GM12878 (cell line): ENCODE measurements at regions of chr11 and their contacts with region 1.

Region 1: DNA sequence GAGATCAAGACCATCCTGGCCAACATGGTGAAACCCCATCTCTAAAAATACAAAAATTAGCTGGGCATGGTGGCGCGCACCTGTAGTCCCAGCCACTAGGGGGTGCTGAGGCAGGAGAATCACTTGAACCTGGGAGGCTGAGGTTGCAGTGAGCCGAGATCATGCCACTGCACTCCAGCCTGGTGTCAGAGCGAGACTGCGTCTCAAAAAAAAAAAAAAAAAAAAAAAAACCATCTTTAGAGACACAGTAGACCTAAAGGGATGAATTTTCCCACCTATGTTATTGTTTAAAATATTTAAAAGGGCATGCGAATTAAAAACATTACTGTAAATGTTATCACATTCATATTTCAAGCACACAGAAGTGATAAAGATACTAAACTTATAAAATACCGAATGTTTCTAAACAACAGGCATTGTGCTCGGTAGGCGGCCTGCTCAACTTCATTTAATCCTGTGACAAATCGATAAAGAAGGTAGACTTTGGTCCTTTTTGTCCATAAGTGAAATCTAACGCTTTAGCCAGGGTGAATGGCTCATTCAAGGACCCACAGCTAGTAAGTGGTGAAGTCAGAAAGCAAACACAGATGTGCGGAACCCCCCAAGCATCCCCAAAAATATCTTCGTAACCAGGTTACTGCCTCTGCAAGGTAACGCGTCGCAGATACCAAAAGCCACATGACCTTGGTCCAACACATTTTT is 16.1 kb downstream of the NCAPD3 start:
- DNase-seq: no peak
- ATAC-seq: peak; percentile 62
- H3K4me3 ChIP-seq: no peak overlapping the region
- H3K27ac ChIP-seq: no peak overlapping the region
- H3K4me1 ChIP-seq: no peaks in the 10 kb centered on the region
- H3K27me3 ChIP-seq: no peaks in the 10 kb centered on the region
- CTCF ChIP-seq: peak; percentile 25 to 50 (median 50); a peak in 5 of 6 replicates
- EP300 ChIP-seq: no peak
- POLR2A ChIP-seq: no peak
- RAD21 ChIP-seq: 0 out of 2 replicates have a peak, but pooled peaks have one; percentile 26

Region 2: DNA sequence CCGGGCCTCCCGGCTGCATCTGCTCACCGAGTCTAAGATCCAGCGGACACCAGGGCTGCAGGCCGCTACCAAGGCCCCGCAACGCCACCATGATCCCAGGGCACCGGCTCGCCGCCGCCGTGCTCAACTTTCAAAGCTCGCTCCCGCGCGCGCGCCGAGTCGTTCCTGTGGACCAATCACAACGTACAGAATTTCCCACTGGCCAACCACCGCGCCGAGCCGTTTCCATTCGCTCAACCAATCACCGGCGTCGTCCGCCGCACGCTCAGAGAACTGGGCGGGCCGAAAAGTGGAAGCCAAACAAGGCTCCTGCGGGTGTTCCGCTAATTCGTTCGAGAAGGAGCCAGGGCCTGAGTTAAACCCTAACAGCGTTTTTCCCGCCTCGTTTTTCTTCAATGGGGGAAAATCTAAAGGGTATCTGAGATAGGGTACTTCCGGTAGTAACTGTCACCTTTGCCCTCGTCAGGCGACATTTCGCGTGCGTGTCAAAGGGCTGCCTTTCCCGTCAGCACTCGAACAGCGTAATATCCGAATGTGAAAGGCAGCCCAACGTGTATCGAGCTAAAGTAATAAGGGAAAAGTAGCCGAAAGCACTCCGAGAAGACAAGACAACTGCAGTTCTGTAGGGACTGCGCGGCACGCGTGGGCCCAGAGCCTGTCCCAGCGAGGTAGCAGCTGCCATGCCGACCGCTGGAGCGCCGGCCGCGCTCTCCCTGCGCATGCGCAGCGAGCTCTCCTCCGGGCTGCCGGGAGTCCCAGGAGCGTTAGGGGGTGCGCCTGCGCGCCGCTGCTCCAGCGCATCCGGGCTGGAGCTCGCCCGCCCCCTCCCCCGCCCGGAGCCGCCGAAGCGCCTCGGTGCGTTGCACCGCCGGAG is 16.4 kb after region 1 on chr11 and contains the starts of genes NCAPD3 and VPS26B:
- CTCF ChIA-PET with region 1: interaction called, 16 read pairs
- POLR2A ChIA-PET with region 1: no interaction called
- RAD21 ChIA-PET with region 1: interaction called, 3 read pairs
- SMC1A ChIA-PET with region 1: interaction called, 4 read pairs
- in situ Hi-C with region 1: no loop called
- intact Hi-C with region 1: loop called (anchors 2 kb)
- DNase-seq: peak; percentile 77
- ATAC-seq: peak; percentile 90
- H3K4me3 ChIP-seq: peak within 1 kb of the TSS; percentile 74
- H3K27ac ChIP-seq: peak within 1 kb of the TSS; percentile 91
- H3K4me1 ChIP-seq: peaks cover 19% of the 10 kb centered on the region
- H3K27me3 ChIP-seq: no peaks in the 10 kb centered on the region
- CTCF ChIP-seq: no peak
- EP300 ChIP-seq: no peak
- POLR2A ChIP-seq: peak; percentile 86
- RAD21 ChIP-seq: no peak
- polyA plus RNA-seq, gene NCAPD3: 14.9 to 17.5 TPM
- polyA plus RNA-seq, gene VPS26B: 1.6 to 2.7 TPM

Region 3: GRCh38 chr11:134244655-134245054 is 37.0 kb after region 1 on chr11:
- CTCF ChIA-PET with region 1: interaction called, 56 read pairs
- POLR2A ChIA-PET with region 1: no interaction called
- RAD21 ChIA-PET with region 1: interaction called, 8 read pairs
- SMC1A ChIA-PET with region 1: interaction called, 10 read pairs
- in situ Hi-C with region 1: no loop called
- intact Hi-C with region 1: no loop called
- DNase-seq: no peak
- ATAC-seq: peak; percentile 96
- H3K4me3 ChIP-seq: no peak overlapping the region
- H3K27ac ChIP-seq: no peak overlapping the region
- H3K4me1 ChIP-seq: no peaks in the 10 kb centered on the region
- H3K27me3 ChIP-seq: no peaks in the 10 kb centered on the region
- CTCF ChIP-seq: peak; percentile 63 to 72 (median 63)
- EP300 ChIP-seq: no peak
- POLR2A ChIP-seq: no peak
- RAD21 ChIP-seq: peak; percentile 68

Region 4: GRCh38 chr11:134253188-134253993 is 45.7 kb after region 1 on chr11 and contains the starts of genes ACAD8 and THYN1:
- CTCF ChIA-PET with region 1: interaction called, 18 read pairs
- POLR2A ChIA-PET with region 1: interaction called, 3 read pairs
- RAD21 ChIA-PET with region 1: interaction called, 4 read pairs
- SMC1A ChIA-PET with region 1: interaction called, 4 read pairs
- in situ Hi-C with region 1: no loop called
- intact Hi-C with region 1: loop called (anchors 10 kb)
- DNase-seq: peak; percentile 86
- ATAC-seq: peak; percentile 100
- H3K4me3 ChIP-seq: peak within 1 kb of the TSS; percentile 90
- H3K27ac ChIP-seq: peak within 1 kb of the TSS; percentile 62
- H3K4me1 ChIP-seq: no peaks in the 10 kb centered on the region
- H3K27me3 ChIP-seq: no peaks in the 10 kb centered on the region
- CTCF ChIP-seq: no peak
- EP300 ChIP-seq: no peak
- POLR2A ChIP-seq: peak; percentile 88
- RAD21 ChIP-seq: no peak
- polyA plus RNA-seq, gene ACAD8: 9.9 to 12.8 TPM
- polyA plus RNA-seq, gene THYN1: 212 to 221 TPM

Region 5: GRCh38 chr11:134350381-134350780 is 142.7 kb after region 1 on chr11:
- CTCF ChIA-PET with region 1: no interaction called
- POLR2A ChIA-PET with region 1: no interaction called
- RAD21 ChIA-PET with region 1: no interaction called
- SMC1A ChIA-PET with region 1: no interaction called
- in situ Hi-C with region 1: no loop called
- intact Hi-C with region 1: loop called (anchors 10 kb)
- DNase-seq: peak; percentile 37
- ATAC-seq: peak; percentile 91
- H3K4me3 ChIP-seq: no peak overlapping the region; the same call in 1 of the 2 replicates
- H3K27ac ChIP-seq: 0 out of 2 replicates have a peak overlapping the region, but pooled peaks have one; percentile 25
- H3K4me1 ChIP-seq: peaks cover 16% of the 10 kb centered on the region
- H3K27me3 ChIP-seq: no peaks in the 10 kb centered on the region; a peak in 1 of 4 replicates
- CTCF ChIP-seq: no peak
- EP300 ChIP-seq: peak; percentile 22 to 71; a peak in 2 of 4 replicates
- POLR2A ChIP-seq: peak; percentile 42; the same call in 1 of the 2 replicates
- RAD21 ChIP-seq: no peak